Ovary (tissue), 10 donors: ENCODE measurements at regions of chr3 and their contacts with region 1.

Region 1: GRCh38 chr3:23797491-23797890 is 8.3 kb upstream of the UBE2E1 start:
- DNase-seq: no peak
- H3K4me3 ChIP-seq: no peak overlapping the region
- H3K27ac ChIP-seq: no peak overlapping the region
- H3K4me1 ChIP-seq: no peaks in the 10 kb centered on the region
- H3K27me3 ChIP-seq: no peaks in the 10 kb centered on the region
- CTCF ChIP-seq: no peak
- EP300 ChIP-seq: no peak
- POLR2A ChIP-seq: no peak

Region 2: DNA sequence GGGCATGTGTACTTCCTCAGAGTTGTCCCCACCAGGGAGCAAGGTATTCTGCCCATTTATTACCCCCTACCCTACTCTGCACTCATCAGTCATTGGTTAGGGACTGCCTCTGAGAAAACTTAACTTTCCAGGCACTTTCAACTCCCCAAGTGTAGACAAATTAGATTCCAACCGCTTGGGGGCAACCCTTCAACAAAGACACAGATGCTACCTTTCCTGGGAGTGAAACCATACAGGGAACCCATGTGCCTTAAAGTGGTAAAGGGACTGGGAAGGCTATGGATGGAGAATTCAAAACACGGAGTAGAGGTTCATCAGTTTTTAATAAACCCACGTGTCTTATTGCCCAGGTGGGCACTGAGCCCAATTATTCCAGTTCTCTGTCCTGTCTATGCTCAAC is 613.8 kb before region 1 on chr3:
- intact Hi-C with region 1: loop called in 1 of 4 experiments (anchors 10 kb)
- DNase-seq: peak in 1 of 5 donors; percentile 28
- H3K4me3 ChIP-seq: no peak overlapping the region
- H3K27ac ChIP-seq: no peak overlapping the region
- H3K4me1 ChIP-seq: no peaks in the 10 kb centered on the region
- H3K27me3 ChIP-seq: no peaks in the 10 kb centered on the region
- CTCF ChIP-seq: no peak
- EP300 ChIP-seq: no peak
- POLR2A ChIP-seq: no peak

Region 3: DNA sequence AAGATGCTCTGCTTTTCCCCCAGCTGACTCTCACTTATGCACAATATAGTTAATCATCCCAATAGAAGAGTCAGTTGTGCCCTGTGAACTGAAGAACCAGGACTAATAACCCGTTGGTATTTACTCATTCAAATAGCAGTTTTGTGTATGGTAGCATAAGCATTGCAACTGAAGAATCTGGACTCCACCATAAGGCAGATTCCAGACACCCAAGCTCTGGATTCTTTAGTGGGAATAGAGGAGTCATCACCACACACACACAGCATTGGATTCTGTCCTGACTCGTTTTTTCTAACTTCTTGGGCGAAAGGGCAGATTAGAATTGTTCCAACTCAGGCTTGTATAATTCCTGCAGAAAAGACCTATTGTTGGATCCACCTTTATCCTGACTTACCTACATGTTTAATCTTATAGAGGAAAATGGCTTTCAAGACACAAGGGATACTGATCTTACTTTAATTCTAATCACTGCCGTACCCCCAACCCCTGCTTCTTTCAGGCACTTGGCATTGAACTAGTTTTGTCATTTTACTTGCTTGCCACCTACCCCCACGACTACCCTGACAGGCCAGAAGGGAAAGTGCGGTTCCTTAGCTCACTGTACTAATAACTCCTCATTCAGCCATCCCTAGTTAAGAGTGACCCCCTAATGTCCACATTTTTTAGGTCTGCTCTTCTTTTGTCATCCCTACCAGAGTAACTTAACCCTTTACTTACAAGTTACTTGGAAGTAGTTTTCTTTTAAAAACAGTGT is 77.0 kb after region 1 on chr3:
- intact Hi-C with region 1: no loop called
- DNase-seq: no peak
- H3K4me3 ChIP-seq: no peak overlapping the region
- H3K27ac ChIP-seq: no peak overlapping the region
- H3K4me1 ChIP-seq: peaks cover 6% of the 10 kb centered on the region
- H3K27me3 ChIP-seq: no peaks in the 10 kb centered on the region
- CTCF ChIP-seq: no peak
- EP300 ChIP-seq: no peak
- POLR2A ChIP-seq: no peak